ENCODE measurements at regions of chr10 and their contacts with region 1.

Region 1: DNA sequence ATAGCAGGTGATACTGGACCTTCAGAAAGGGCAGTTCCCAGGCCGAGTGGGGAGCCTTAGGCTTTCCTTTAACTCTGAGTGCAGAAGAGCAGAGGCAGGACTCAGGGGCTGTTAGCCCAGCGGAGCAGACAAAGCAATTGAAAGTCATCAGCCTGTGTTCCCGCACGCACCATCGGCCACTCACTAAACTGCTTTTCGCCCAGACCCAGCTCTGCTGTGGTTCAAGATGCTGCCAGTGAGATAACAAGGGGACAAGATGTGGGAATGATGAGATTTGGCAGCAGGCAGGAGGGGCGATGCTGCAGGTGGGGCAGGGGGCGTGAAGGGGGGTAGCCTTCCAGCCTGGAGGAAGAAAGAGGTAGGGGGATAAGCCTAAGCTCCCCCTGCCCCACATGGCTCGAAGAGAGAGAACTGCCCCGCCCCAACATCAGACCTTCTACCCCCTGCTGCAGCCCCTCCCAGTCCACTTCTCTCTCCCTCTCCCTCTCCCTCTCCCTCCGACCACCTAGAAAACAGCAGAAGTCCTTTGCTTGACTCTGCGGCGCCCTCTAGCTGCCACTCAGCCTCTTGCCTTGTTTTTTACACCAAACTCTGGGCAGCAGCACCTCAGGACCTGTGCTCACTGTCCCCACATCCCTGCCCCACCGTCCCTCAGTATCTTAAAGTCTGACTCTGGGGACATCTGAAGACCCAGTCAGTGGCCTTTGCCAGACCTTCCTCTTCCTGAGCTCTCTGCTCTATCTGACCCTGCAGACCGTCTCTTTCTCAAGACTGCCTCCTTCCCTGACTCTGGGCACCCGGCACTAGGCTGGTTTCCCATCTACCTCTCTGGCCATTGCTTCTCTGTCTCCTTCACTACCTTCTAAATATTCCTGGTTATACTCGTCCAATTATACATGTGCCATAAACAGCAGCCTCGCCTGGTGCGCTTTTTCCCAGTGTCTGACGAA is 110.5 kb downstream of the C10orf105 start:
- DNase-seq: peak; percentile 78 to 92 (median 80)
- ATAC-seq: peak; percentile 87
- H3K4me3 ChIP-seq: no peak overlapping the region
- H3K27ac ChIP-seq: no peak overlapping the region
- H3K4me1 ChIP-seq: peaks cover 17 to 28% of the 10 kb centered on the region in 2 experiments
- H3K27me3 ChIP-seq: no peaks in the 10 kb centered on the region
- CTCF ChIP-seq: peak; percentile 94 to 96 (median 94)
- EP300 ChIP-seq: no peak
- POLR2A ChIP-seq: no peak
- RAD21 ChIP-seq: peak; percentile 59 to 83

Region 2: DNA sequence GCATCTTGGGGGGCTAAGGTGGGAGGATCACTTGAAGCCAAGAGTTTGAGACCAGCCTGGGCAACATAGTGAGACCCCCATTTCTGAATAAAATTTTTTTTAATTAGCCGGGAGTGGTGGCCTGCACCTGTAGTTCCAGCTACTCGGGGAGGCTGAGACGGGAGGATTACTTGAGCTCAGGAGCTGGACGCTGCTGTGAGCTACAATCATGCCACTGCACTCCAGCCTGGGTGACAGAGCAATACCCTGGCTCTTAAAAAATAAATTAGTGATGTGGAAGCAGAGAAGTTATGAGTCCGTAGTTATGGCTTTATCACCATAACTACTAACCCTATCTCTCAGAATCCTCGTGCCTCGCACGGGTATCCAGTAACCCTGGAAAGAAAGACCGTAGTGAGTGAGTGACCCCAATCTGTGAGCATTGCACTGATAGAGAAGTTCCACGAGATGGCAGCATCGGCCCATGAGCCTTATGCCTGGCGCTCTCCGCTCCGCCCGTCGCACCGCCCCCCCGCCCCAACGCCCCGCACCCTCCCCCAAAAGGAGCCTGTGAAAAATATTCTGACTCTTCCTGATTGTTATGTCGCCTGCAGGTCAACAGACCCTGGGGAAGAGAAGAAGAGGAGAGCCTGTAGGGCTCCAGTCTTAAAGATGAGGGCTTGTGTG is 294.9 kb before region 1 on chr10:
- CTCF ChIA-PET with region 1: interaction called, 3 read pairs
- POLR2A ChIA-PET with region 1: no interaction called
- in situ Hi-C with region 1: no loop called
- intact Hi-C with region 1: loop called (anchors 5 kb)
- DNase-seq: peak; percentile 79 to 91 (median 90)
- ATAC-seq: peak; percentile 73
- H3K4me3 ChIP-seq: no peak overlapping the region
- H3K27ac ChIP-seq: no peak overlapping the region
- H3K4me1 ChIP-seq: peaks cover 8 to 9% of the 10 kb centered on the region in 2 experiments; a peak in 4 of 5 replicates
- H3K27me3 ChIP-seq: peaks cover 0 to 10% of the 10 kb centered on the region in 2 experiments; a peak in 2 of 5 replicates
- CTCF ChIP-seq: peak; percentile 68 to 82 (median 76)
- EP300 ChIP-seq: no peak
- POLR2A ChIP-seq: no peak
- RAD21 ChIP-seq: peak; percentile 64 to 78

Region 3: GRCh38 chr10:71486484-71487114 is 122.5 kb before region 1 on chr10:
- CTCF ChIA-PET with region 1: no interaction called
- POLR2A ChIA-PET with region 1: no interaction called
- in situ Hi-C with region 1: no loop called
- intact Hi-C with region 1: loop called (anchors 2 kb)
- DNase-seq: peak; percentile 66 to 82 (median 73)
- ATAC-seq: peak; percentile 98
- H3K4me3 ChIP-seq: no peak overlapping the region
- H3K27ac ChIP-seq: no peak overlapping the region
- H3K4me1 ChIP-seq: no peaks in the 10 kb centered on the region
- H3K27me3 ChIP-seq: peaks cover 24 to 39% of the 10 kb centered on the region in 2 experiments; a peak in 4 of 5 replicates
- CTCF ChIP-seq: peak; percentile 85 to 93 (median 91)
- EP300 ChIP-seq: no peak
- POLR2A ChIP-seq: no peak
- RAD21 ChIP-seq: peak; percentile 51 to 87

Region 4: DNA sequence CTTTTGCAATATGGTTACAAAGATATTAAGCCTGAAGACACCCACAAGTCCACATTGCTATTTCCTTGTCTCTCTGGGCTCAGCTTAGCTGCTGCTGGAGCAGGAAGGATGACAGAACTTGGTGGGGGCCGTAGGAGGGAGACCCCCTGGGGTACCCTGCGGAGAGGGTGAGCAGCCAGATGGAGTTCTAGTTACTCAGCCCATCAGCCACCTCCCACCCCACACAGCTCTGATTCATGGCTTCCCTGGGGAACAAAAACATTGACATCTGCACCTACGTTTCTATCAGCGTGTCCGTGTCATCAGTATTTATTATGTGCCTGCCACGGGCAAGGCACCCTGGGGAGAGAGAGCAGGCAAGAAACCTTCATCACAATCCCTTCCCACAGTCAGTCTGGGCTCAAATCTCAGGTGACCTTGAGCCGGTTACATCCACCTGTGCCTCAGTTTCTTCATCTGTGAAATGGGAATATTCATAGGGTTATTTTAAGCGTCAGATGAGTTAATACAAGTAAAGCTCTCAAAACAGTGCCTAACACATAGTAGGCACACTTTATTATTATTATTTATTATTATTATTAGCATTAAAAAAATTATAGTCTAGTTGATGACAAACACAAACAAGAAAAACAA is 21.0 kb before region 1 on chr10:
- CTCF ChIA-PET with region 1: no interaction called
- POLR2A ChIA-PET with region 1: no interaction called
- in situ Hi-C with region 1: no loop called
- intact Hi-C with region 1: no loop called
- DNase-seq: no peak
- ATAC-seq: no peak
- H3K4me3 ChIP-seq: no peak overlapping the region
- H3K27ac ChIP-seq: no peak overlapping the region
- H3K4me1 ChIP-seq: peaks cover 2 to 13% of the 10 kb centered on the region in 2 experiments; a peak in 4 of 5 replicates
- H3K27me3 ChIP-seq: peaks cover 0 to 6% of the 10 kb centered on the region in 2 experiments; a peak in 2 of 5 replicates
- CTCF ChIP-seq: no peak
- EP300 ChIP-seq: no peak
- POLR2A ChIP-seq: no peak
- RAD21 ChIP-seq: no peak

Region 5: GRCh38 chr10:71623098-71623985 is 14.2 kb after region 1 on chr10:
- CTCF ChIA-PET with region 1: no interaction called
- POLR2A ChIA-PET with region 1: interaction called, 11 read pairs
- in situ Hi-C with region 1: no loop called
- intact Hi-C with region 1: no loop called
- DNase-seq: peak; percentile 81 to 84 (median 82)
- ATAC-seq: peak; percentile 93
- H3K4me3 ChIP-seq: no peak overlapping the region
- H3K27ac ChIP-seq: no peak overlapping the region
- H3K4me1 ChIP-seq: peaks cover 23 to 47% of the 10 kb centered on the region in 2 experiments; a peak in 4 of 5 replicates
- H3K27me3 ChIP-seq: no peaks in the 10 kb centered on the region
- CTCF ChIP-seq: peak; percentile 50 to 61 (median 51)
- EP300 ChIP-seq: no peak
- POLR2A ChIP-seq: no peak
- RAD21 ChIP-seq: peak; percentile 34 to 70; a peak in 3 of 4 replicates

Region 6: GRCh38 chr10:71647526-71648253 is 38.6 kb after region 1 on chr10:
- CTCF ChIA-PET with region 1: no interaction called
- POLR2A ChIA-PET with region 1: no interaction called
- in situ Hi-C with region 1: no loop called
- intact Hi-C with region 1: loop called (anchors 5 kb)
- DNase-seq: peak; percentile 72 to 88 (median 80)
- ATAC-seq: peak; percentile 79
- H3K4me3 ChIP-seq: no peak overlapping the region
- H3K27ac ChIP-seq: peak overlapping the region; percentile 78
- H3K4me1 ChIP-seq: peaks cover 39 to 62% of the 10 kb centered on the region in 2 experiments
- H3K27me3 ChIP-seq: no peaks in the 10 kb centered on the region
- CTCF ChIP-seq: peak; percentile 80 to 95 (median 90)
- EP300 ChIP-seq: peak; percentile 6; the same call in 1 of the 2 replicates
- POLR2A ChIP-seq: no peak
- RAD21 ChIP-seq: peak; percentile 43 to 86

Region 7: DNA sequence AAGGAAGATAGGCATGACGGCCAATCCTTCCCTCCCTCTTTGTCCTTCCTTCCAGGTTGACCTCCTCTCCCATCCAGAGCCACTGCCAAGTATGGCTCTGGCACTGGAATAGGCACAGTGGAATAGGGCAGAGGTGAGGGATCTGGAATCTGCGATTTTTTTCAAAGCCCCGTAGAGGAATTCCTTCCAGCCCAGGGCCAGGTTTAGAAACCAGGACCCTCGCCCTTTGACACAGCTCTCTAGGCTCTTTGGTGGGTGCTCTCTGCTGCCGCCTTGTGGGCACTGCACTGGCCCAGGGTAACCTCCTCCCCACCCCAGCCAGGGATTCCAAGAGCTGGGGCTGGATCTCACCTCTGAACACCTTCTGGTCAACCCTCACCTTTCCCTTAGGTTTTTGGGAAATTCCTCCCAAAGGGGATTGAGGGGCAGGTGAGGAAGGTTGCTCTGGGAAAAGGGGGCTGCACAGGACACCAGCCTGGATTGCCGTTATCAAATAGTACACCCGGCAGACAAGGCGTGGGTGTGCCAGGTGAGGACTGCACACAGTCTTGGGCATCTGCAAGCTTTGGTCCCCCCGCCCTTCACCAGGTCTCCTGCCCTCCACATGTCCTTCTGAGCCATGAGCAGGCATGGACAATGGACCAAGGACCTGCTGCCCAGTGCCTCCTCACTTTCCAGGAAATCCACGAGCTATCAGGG is 87.7 kb after region 1 on chr10:
- CTCF ChIA-PET with region 1: no interaction called
- POLR2A ChIA-PET with region 1: no interaction called
- in situ Hi-C with region 1: no loop called
- intact Hi-C with region 1: no loop called
- DNase-seq: peak; percentile 86 to 92 (median 90)
- ATAC-seq: peak; percentile 94
- H3K4me3 ChIP-seq: no peak overlapping the region
- H3K27ac ChIP-seq: no peak overlapping the region
- H3K4me1 ChIP-seq: peaks cover 13 to 51% of the 10 kb centered on the region in 2 experiments
- H3K27me3 ChIP-seq: no peaks in the 10 kb centered on the region
- CTCF ChIP-seq: peak; percentile 93 to 99 (median 95)
- EP300 ChIP-seq: no peak
- POLR2A ChIP-seq: no peak
- RAD21 ChIP-seq: peak; percentile 64 to 89

Measured in K562 (cell line).